Psoas muscle (tissue), 8 donors: ENCODE measurements at regions of chr11 and their contacts with region 1.

Region 1: GRCh38 chr11:83071567-83072349 is at the start of gene RAB30:
- DNase-seq: peak; percentile 95 to 97
- ATAC-seq: peak; percentile 93 to 97 (median 96)
- H3K4me3 ChIP-seq: peak within 1 kb of the TSS; percentile 68
- H3K27ac ChIP-seq: peak within 1 kb of the TSS; percentile 90
- H3K4me1 ChIP-seq: peaks cover 43% of the 10 kb centered on the region
- H3K27me3 ChIP-seq: no peaks in the 10 kb centered on the region
- CTCF ChIP-seq: no peak
- total RNA-seq, gene RAB30: 15.2 to 89.7 (median 37.6) TPM

Region 2: GRCh38 chr11:82692981-82693380 is 378.8 kb before region 1 on chr11:
- intact Hi-C with region 1: no loop called
- DNase-seq: no peak
- ATAC-seq: no peak
- H3K4me3 ChIP-seq: no peak overlapping the region
- H3K27ac ChIP-seq: no peak overlapping the region
- H3K4me1 ChIP-seq: no peaks in the 10 kb centered on the region
- H3K27me3 ChIP-seq: peaks cover 0 to 5% (median 4%) of the 10 kb centered on the region in 3 donors
- CTCF ChIP-seq: no peak

Region 3: DNA sequence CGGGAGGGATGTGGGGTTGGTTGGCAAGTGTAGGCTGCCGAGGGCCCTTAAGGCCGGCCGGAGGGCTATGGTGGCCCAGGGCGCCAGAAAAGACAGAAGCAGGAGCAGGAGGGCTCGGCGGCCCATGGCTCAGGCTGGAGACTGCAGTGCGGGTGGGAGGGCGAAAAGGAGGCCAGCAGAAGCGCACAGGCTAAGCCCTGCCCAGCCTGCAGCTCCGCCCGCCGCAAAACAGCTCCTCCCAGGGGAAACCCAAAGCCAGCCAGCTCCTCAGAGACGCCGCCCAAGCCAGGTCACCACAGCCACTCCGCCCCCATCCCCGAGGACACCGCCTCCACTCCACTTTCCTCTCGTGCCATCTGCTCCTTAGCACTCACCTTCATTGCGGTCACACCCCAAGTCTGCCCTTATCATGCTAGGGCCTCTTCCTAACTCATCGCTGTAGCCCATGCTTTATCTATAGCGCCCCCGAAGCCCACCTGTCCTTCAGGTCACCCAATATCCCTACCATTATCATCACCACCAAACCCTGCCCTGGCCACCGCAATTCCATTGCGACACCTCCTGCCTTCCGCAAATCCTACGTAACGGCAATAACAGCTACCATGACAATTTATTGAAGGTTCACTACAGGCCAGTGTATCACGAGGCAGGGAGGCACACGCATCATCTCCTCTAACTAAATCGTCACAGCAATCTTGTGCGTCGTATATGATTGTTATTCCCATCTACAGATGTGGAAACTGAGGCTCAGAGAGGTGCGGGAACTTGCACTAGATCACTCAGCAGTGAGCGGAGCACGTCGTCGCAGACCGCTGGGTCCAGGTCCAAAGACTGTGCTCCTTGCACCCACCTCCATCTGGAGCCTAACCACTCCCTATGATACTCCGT is 171.2 kb before region 1 on chr11 and contains the start of gene PRCP:
- intact Hi-C with region 1: loop called (anchors 5 to 10 kb)
- DNase-seq: peak; percentile 92 to 95
- ATAC-seq: peak; percentile 91 to 93 (median 92)
- H3K4me3 ChIP-seq: peak within 1 kb of the TSS; percentile 84
- H3K27ac ChIP-seq: peak within 1 kb of the TSS; percentile 88
- H3K4me1 ChIP-seq: peaks cover 10% of the 10 kb centered on the region
- H3K27me3 ChIP-seq: no peaks in the 10 kb centered on the region
- CTCF ChIP-seq: no peak
- total RNA-seq, gene PRCP: 11.5 to 23.5 (median 15.2) TPM

Region 4: GRCh38 chr11:82996966-82997606 is 74.7 kb before region 1 on chr11:
- intact Hi-C with region 1: loop called in 1 of 2 experiments (anchors 5 kb)
- DNase-seq: no peak
- ATAC-seq: peak; percentile 68 to 86 (median 80)
- H3K4me3 ChIP-seq: peak overlapping the region; percentile 34
- H3K27ac ChIP-seq: peak overlapping the region; percentile 66
- H3K4me1 ChIP-seq: peaks cover 65% of the 10 kb centered on the region
- H3K27me3 ChIP-seq: no peaks in the 10 kb centered on the region
- CTCF ChIP-seq: no peak

Region 5: GRCh38 chr11:83054001-83054400 is 17.8 kb before region 1 on chr11:
- intact Hi-C with region 1: loop called in 1 of 2 experiments (anchors 2 kb)
- DNase-seq: no peak
- ATAC-seq: no peak
- H3K4me3 ChIP-seq: no peak overlapping the region
- H3K27ac ChIP-seq: peak overlapping the region; percentile 78
- H3K4me1 ChIP-seq: peaks cover 69% of the 10 kb centered on the region
- H3K27me3 ChIP-seq: no peaks in the 10 kb centered on the region
- CTCF ChIP-seq: no peak

Region 6: DNA sequence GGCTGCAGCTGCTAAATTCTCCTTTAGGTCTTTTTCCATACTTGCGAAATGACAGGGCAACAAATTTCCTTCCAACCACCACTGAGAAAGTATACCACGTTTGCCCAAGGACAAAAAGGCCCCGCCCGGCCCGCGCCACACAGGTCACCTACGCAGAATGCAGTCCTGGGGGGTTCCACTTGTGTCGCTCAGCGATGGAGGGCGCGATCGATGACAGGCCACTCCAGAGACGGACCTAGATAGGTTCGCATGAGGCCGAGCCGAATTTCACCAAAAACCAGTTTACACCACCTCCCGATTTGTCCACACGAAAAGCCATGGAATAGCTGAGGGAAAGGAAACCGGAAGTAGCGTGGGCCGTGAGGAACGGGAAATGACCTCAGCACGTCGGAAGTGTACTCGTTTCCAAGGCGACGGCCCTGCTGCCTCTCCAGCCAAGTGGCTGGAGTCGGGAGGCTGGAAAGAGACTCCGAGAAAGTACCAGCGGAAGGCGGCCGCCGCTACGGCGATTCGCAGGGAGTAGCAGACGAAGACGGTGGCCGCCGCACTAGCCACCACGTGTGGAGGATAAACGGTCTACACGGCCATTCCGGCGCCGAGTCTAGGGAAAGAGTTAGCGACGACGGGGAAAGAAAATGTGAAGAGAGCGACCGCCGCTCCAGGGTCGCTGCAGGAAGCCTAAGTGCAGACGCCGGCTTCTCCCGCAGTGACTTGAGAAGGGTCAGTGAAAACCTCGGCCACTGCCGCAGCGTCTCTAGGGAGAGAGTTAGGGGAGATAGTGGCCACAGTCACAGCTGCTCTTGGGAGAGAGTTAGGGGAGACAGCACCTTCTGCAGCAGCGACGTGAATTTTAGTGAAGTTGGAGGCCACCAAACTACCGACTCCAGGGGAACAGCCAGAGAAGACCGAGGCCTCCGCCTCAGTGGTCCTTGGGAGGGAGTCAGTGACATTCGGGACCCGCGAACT is 121.8 kb after region 1 on chr11 and contains the start of gene ANKRD42:
- intact Hi-C with region 1: loop called in 1 of 2 experiments (anchors 5 kb)
- DNase-seq: peak; percentile 91 to 96
- ATAC-seq: peak; percentile 96 to 98 (median 97)
- H3K4me3 ChIP-seq: peak within 1 kb of the TSS; percentile 86
- H3K27ac ChIP-seq: peak within 1 kb of the TSS; percentile 88
- H3K4me1 ChIP-seq: peaks cover 22% of the 10 kb centered on the region
- H3K27me3 ChIP-seq: no peaks in the 10 kb centered on the region
- CTCF ChIP-seq: no peak
- total RNA-seq, gene ANKRD42: 3.6 to 4.6 (median 3.7) TPM